CD4-positive, alpha-beta memory T cell (primary cell): ENCODE measurements at regions of chr2 and their contacts with region 1.

Region 1: GRCh38 chr2:207692206-207693065 is 19.0 kb upstream of the CCNYL1 start:
- DNase-seq: peak; percentile 34 to 45 (median 37)
- H3K4me3 ChIP-seq: no peak overlapping the region
- H3K4me3 Mint-ChIP-seq: no peak overlapping the region
- H3K27ac ChIP-seq: no peak overlapping the region
- H3K27ac Mint-ChIP-seq: no peak overlapping the region
- H3K4me1 ChIP-seq: no peaks in the 10 kb centered on the region
- H3K4me1 Mint-ChIP-seq: peaks cover 0 to 5% (median 2%) of the 10 kb centered on the region in 4 donors
- H3K27me3 ChIP-seq: no peaks in the 10 kb centered on the region
- H3K27me3 Mint-ChIP-seq: no peaks in the 10 kb centered on the region

Region 2: GRCh38 chr2:207704078-207704477 is 11.6 kb after region 1 on chr2:
- CTCF ChIA-PET with region 1: interaction called, 11 read pairs
- POLR2A ChIA-PET with region 1: no interaction called
- intact Hi-C with region 1: no loop called
- DNase-seq: no peak
- H3K4me3 ChIP-seq: no peak overlapping the region
- H3K4me3 Mint-ChIP-seq: no peak overlapping the region
- H3K27ac ChIP-seq: no peak overlapping the region
- H3K27ac Mint-ChIP-seq: no peak overlapping the region
- H3K4me1 ChIP-seq: no peaks in the 10 kb centered on the region
- H3K4me1 Mint-ChIP-seq: no peaks in the 10 kb centered on the region
- H3K27me3 ChIP-seq: no peaks in the 10 kb centered on the region
- H3K27me3 Mint-ChIP-seq: peaks cover 0 to 1% of the 10 kb centered on the region in 2 donors

Region 3: DNA sequence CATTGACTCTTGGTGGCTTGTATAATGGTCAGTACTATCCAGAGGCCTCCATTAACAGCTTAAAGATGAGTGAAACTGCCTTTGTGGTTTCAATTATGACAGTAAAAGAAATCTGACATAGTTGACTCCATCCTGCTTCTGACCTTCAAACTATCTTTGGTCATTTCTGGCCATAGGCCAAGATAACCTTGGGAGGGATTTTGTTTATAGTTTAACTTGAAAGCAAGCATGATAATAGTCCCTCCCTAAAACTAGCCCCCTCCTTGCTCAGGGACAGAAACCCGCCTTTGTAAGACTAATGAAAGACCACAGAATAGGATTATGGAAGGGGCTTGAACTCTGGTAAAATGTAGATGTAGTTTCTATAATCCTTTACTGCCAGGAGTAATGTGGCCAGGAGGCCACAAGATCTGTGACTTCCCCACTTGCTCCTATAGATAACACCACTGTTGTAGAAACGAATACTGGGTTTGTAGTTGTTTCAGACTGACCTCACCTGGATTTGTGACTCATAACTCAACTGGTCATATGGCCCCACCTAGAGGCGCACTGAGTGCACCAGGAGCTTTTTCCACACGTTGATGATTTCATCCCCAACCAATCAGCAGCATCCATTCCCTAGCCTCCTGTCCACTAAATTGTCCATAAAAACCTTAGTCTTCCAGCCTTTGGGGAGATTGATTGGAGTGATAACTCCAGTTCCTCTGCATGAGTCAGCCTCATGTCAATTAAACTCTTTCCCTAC is 341.5 kb after region 1 on chr2:
- CTCF ChIA-PET with region 1: no interaction called
- POLR2A ChIA-PET with region 1: no interaction called
- intact Hi-C with region 1: loop called (anchors 1 kb)
- DNase-seq: peak in 3 of 5 donors; percentile 12 to 23 (median 16)
- H3K4me3 ChIP-seq: no peak overlapping the region
- H3K4me3 Mint-ChIP-seq: no peak overlapping the region
- H3K27ac ChIP-seq: no peak overlapping the region
- H3K27ac Mint-ChIP-seq: no peak overlapping the region
- H3K4me1 ChIP-seq: no peaks in the 10 kb centered on the region
- H3K4me1 Mint-ChIP-seq: no peaks in the 10 kb centered on the region
- H3K27me3 ChIP-seq: no peaks in the 10 kb centered on the region
- H3K27me3 Mint-ChIP-seq: peaks cover 0 to 2% of the 10 kb centered on the region in 2 donors

Region 4: GRCh38 chr2:208040199-208041171 is 348.0 kb after region 1 on chr2:
- CTCF ChIA-PET with region 1: interaction called, 17 read pairs
- POLR2A ChIA-PET with region 1: no interaction called
- intact Hi-C with region 1: no loop called
- DNase-seq: peak; percentile 37 to 58 (median 55)
- H3K4me3 ChIP-seq: no peak overlapping the region
- H3K4me3 Mint-ChIP-seq: no peak overlapping the region
- H3K27ac ChIP-seq: no peak overlapping the region
- H3K27ac Mint-ChIP-seq: peak overlapping the region in 3 of 7 donors; percentile 31 to 42 (median 42)
- H3K4me1 ChIP-seq: no peaks in the 10 kb centered on the region
- H3K4me1 Mint-ChIP-seq: no peaks in the 10 kb centered on the region
- H3K27me3 ChIP-seq: no peaks in the 10 kb centered on the region
- H3K27me3 Mint-ChIP-seq: peaks cover 0 to 2% of the 10 kb centered on the region in 2 donors

Region 5: GRCh38 chr2:208072250-208072892 is 379.9 kb after region 1 on chr2:
- CTCF ChIA-PET with region 1: no interaction called
- POLR2A ChIA-PET with region 1: no interaction called
- intact Hi-C with region 1: loop called (anchors 1 kb)
- DNase-seq: peak; percentile 43 to 55 (median 47)
- H3K4me3 ChIP-seq: no peak overlapping the region
- H3K4me3 Mint-ChIP-seq: no peak overlapping the region
- H3K27ac ChIP-seq: no peak overlapping the region
- H3K27ac Mint-ChIP-seq: no peak overlapping the region
- H3K4me1 ChIP-seq: no peaks in the 10 kb centered on the region
- H3K4me1 Mint-ChIP-seq: no peaks in the 10 kb centered on the region
- H3K27me3 ChIP-seq: peaks cover 4% of the 10 kb centered on the region
- H3K27me3 Mint-ChIP-seq: peaks cover 7 to 16% of the 10 kb centered on the region in 2 donors